OCI-LY7 (cell line): ENCODE measurements at regions of chr1 and their contacts with region 1.

Region 1: GRCh38 chr1:194225821-194226220 is 1039.4 kb upstream of the B3GALT2 start:
- DNase-seq: peak; percentile 86
- H3K4me3 ChIP-seq: peak overlapping the region; percentile 56
- H3K27ac ChIP-seq: peak overlapping the region; percentile 99
- H3K4me1 ChIP-seq: peaks cover 49% of the 10 kb centered on the region
- CTCF ChIP-seq: no peak

Region 2: DNA sequence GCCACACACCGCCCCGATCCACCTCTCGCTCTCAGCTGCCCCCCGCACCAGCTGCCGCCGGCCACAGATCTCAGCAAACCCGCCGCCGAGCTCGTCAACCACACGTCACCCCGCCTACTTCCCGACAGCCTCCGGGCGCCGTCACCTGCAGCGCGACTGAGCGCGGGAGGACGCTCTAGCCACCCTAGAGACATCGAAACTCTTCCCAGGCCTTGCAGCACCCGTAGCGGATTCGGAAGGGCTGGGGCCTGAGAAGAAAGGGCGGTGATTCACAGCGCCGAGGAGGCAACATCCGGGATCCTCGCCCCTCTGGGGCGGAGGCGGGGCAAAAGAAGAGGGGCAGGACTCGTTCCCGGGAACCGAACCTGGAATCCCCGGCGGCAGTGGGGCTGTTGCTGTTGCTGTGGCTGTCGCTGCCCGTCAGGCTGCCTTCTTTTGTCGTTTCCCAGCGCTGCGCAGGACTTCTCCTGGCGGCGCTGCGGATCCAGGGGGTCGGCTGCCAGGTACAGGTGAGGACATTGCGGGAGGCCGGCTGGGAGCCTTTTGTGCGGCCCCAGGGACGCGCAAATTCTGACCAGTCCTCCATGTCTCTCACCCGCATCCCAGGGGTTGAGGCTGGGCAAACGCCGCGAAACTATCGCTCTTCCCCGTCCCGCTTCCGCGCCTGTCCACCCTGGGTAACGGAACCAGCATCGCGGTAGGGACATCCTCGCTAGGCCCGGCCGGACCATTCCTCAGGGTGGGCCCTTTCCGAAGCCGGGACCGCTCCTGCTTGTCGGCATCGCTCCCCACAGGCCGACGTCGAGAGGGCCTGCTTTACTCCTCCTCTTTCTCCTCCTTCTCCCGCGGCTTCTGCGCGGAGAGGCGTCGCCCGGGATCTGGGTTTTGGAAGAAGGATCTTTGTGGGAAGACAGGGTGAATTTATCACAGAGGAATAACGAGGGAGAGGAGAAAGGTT is 1166.3 kb before region 1 on chr1 and contains the starts of genes RO60 and UCHL5:
- CTCF ChIA-PET with region 1: no interaction called
- POLR2A ChIA-PET with region 1: no interaction called
- intact Hi-C with region 1: loop called (anchors 5 kb)
- DNase-seq: peak; percentile 97
- H3K4me3 ChIP-seq: peak within 1 kb of the TSS; percentile 100
- H3K27ac ChIP-seq: peak within 1 kb of the TSS; percentile 82
- H3K4me1 ChIP-seq: peaks cover 39% of the 10 kb centered on the region
- CTCF ChIP-seq: no peak
- total RNA-seq, gene RO60: 70.4 and 72.4 TPM in 2 replicates
- total RNA-seq, gene UCHL5: 28.6 and 32.7 TPM in 2 replicates

Region 3: GRCh38 chr1:194214735-194215134 is 11.1 kb before region 1 on chr1:
- CTCF ChIA-PET with region 1: interaction called, 3 read pairs
- POLR2A ChIA-PET with region 1: interaction called, 42 read pairs
- intact Hi-C with region 1: no loop called
- DNase-seq: no peak
- H3K4me3 ChIP-seq: no peak overlapping the region
- H3K27ac ChIP-seq: no peak overlapping the region
- H3K4me1 ChIP-seq: no peaks in the 10 kb centered on the region
- CTCF ChIP-seq: no peak

Region 4: DNA sequence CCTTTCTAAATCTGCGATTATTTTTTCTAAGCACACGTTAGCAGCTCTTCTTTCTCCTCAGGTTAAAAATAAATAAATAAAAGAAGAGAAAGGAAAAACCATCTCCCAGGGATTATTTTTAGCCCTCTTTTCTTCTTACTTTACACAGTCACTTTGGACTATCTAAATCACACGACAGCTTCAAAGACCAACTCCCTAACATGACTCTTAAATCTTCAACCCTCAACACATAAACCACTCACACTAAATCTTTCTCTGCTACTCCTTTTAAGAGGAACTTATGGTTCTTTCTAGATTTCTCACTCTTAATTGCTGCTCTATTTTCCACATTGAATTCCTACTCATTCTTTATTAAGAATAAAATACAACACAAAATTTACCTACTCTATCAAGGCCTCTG is 55.6 kb after region 1 on chr1:
- CTCF ChIA-PET with region 1: interaction called, 3 read pairs
- POLR2A ChIA-PET with region 1: interaction called, 10 read pairs
- intact Hi-C with region 1: no loop called
- DNase-seq: no peak
- H3K4me3 ChIP-seq: peak overlapping the region; percentile 21
- H3K27ac ChIP-seq: peak overlapping the region; percentile 75
- H3K4me1 ChIP-seq: peaks cover 61% of the 10 kb centered on the region
- CTCF ChIP-seq: no peak

Region 5: GRCh38 chr1:194410756-194411155 is 184.9 kb after region 1 on chr1:
- CTCF ChIA-PET with region 1: no interaction called
- POLR2A ChIA-PET with region 1: no interaction called
- intact Hi-C with region 1: no loop called
- DNase-seq: no peak
- H3K4me3 ChIP-seq: no peak overlapping the region
- H3K27ac ChIP-seq: no peak overlapping the region
- H3K4me1 ChIP-seq: no peaks in the 10 kb centered on the region
- CTCF ChIP-seq: no peak